Spleen (tissue), 13 donors: ENCODE measurements at regions of chr12 and their contacts with region 1.

Region 1: GRCh38 chr12:92649511-92650227 is 53.1 kb upstream of the PLEKHG7 start:
- DNase-seq: no peak
- H3K4me3 ChIP-seq: no peak overlapping the region
- H3K27ac ChIP-seq: no peak overlapping the region
- H3K4me1 ChIP-seq: peaks cover 0 to 9% (median 4%) of the 10 kb centered on the region in 6 donors
- H3K27me3 ChIP-seq: no peaks in the 10 kb centered on the region
- CTCF ChIP-seq: peak in 10 of 11 experiments; percentile 31 to 84 (median 62)
- POLR2A ChIP-seq: no peak

Region 2: GRCh38 chr12:91377436-91377835 is 1272.2 kb before region 1 on chr12:
- intact Hi-C with region 1: loop called (anchors 5 kb)
- DNase-seq: no peak
- H3K4me3 ChIP-seq: no peak overlapping the region
- H3K27ac ChIP-seq: no peak overlapping the region
- H3K4me1 ChIP-seq: peaks cover 0 to 26% (median 10%) of the 10 kb centered on the region in 6 donors
- H3K27me3 ChIP-seq: peaks cover 0 to 5% (median 0%) of the 10 kb centered on the region in 7 donors
- CTCF ChIP-seq: no peak
- POLR2A ChIP-seq: no peak